Activated CD8-positive, alpha-beta T cell treated with anti-CD3 and anti-CD28 coated beads, Interleukin-2, amount 10 ng/mL, durations not matched to agents 7 days and 5 days (primary cell): ENCODE measurements at regions of chr15 and their contacts with region 1.

Region 1: DNA sequence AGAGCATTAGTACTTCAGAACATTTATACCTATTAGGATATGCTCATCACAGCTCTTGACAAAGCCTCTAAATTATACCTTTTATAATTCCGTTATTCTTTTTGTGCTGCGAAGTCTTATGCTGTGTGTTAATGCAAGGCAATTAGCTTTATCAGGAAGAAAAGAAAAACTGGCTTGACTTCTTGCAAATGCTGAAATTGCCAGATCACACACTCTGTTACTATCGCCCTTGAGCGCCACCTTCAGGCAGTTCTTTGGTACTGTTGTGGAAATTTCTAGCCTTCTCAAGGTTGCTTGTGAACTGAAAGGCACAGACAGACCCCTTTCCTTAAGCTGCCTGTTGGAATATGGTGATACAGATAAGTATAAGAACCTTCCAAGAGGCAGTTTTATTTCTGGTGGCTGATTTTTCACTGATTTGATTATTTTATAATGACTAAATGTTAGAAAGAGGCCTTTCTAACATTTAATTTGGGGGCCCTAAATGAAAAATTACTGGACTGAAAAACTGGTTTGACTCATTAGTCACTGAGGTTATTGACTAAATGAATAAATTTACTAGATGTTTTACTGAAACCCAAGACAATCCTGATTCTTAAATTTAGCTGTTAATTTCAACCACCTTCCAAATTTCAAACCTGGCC is 126.2 kb upstream of the RASGRP1 start:
- DNase-seq: peak; percentile 91
- ATAC-seq: peak; percentile 28
- H3K4me3 Mint-ChIP-seq: no peak overlapping the region
- H3K27ac Mint-ChIP-seq: no peak overlapping the region
- H3K4me1 Mint-ChIP-seq: peaks cover 82% of the 10 kb centered on the region
- H3K27me3 Mint-ChIP-seq: no peaks in the 10 kb centered on the region

Region 2: DNA sequence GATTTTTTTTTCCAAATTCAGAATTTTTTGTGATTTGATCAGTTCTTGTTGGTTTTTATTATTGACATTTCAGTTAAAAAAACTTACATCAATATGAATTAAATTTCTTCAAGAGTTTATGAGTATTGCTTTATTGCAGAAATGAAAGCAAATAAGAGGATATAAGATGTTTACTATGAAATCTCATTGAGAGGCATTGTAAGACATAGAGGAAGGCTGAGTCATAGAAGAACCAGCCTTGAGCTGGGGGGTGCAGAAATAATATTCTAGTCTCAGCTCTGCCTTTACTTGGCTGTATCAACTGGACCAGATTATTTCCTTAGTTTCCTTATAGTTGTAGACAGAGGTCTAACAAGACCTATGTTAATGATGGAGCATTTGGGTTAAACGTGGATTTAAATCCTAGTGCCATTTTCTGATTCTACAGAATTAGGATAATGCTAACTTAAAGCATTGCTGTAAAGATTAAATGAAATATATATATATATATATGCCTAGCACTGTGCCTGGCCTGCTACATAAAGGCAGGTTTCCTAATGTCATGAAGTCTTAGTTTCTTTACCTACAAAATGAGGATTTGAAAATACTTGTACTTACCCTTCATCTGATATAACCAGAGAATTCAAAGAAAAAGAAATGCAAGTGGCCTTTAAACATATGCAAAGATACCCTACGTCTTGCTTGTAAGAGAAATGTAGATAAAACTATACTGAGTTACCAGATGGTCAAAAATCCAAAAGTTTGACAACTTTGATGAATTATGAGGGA is 229.6 kb before region 1 on chr15:
- CTCF ChIA-PET with region 1: interaction called, 11 read pairs
- POLR2A ChIA-PET with region 1: no interaction called
- DNase-seq: no peak
- ATAC-seq: no peak
- H3K4me3 Mint-ChIP-seq: no peak overlapping the region
- H3K27ac Mint-ChIP-seq: no peak overlapping the region
- H3K4me1 Mint-ChIP-seq: peaks cover 26% of the 10 kb centered on the region
- H3K27me3 Mint-ChIP-seq: no peaks in the 10 kb centered on the region

Region 3: DNA sequence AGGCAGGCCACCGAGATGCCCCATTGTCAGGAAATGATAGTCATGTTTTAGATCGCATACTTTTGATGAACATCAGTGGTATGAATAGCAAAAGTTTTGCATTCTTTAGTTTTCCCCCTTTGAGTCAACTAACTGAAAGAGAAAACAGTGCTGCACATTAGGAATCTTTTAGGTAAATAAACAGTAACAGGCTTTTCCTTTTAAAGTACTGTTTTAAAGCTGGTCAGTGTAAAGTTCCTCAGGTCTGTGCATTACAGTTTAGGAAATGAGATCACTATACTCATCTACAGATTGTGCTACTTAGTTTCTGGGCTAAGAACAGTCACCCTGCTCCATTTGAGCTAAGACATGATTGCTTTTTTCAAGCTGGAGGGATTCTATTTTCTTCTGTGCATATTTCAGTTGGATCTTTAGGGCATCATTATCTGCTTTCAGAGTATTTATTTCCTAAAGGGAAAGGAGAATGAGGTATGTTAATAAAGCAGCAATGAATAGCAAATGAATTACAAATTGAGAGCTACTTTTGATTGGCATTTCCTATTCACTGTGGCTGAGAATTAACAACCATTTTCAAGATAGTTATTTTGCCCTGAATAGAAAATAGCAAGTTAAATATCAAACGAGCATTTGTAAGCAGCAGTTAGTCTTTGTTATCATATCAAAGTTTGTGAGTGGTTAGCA is 200.4 kb before region 1 on chr15:
- CTCF ChIA-PET with region 1: interaction called, 81 read pairs
- POLR2A ChIA-PET with region 1: interaction called, 4 read pairs
- DNase-seq: no peak
- ATAC-seq: no peak
- H3K4me3 Mint-ChIP-seq: no peak overlapping the region
- H3K27ac Mint-ChIP-seq: peak overlapping the region; percentile 31
- H3K4me1 Mint-ChIP-seq: peaks cover 26% of the 10 kb centered on the region
- H3K27me3 Mint-ChIP-seq: no peaks in the 10 kb centered on the region

Region 4: GRCh38 chr15:38514601-38515000 is 176.2 kb before region 1 on chr15:
- CTCF ChIA-PET with region 1: interaction called, 56 read pairs
- POLR2A ChIA-PET with region 1: interaction called, 3 read pairs
- DNase-seq: no peak
- ATAC-seq: no peak
- H3K4me3 Mint-ChIP-seq: no peak overlapping the region
- H3K27ac Mint-ChIP-seq: peak overlapping the region; percentile 72
- H3K4me1 Mint-ChIP-seq: peaks cover 20% of the 10 kb centered on the region
- H3K27me3 Mint-ChIP-seq: no peaks in the 10 kb centered on the region

Region 5: GRCh38 chr15:38554354-38554753 is 136.5 kb before region 1 on chr15:
- CTCF ChIA-PET with region 1: interaction called, 572 read pairs
- POLR2A ChIA-PET with region 1: interaction called, 336 read pairs
- DNase-seq: no peak
- ATAC-seq: peak; percentile 49
- H3K4me3 Mint-ChIP-seq: peak overlapping the region; percentile 4
- H3K27ac Mint-ChIP-seq: peak overlapping the region; percentile 44
- H3K4me1 Mint-ChIP-seq: peaks cover 83% of the 10 kb centered on the region
- H3K27me3 Mint-ChIP-seq: no peaks in the 10 kb centered on the region

Region 6: GRCh38 chr15:38631126-38632075 is 59.4 kb before region 1 on chr15:
- CTCF ChIA-PET with region 1: interaction called, 13 read pairs
- POLR2A ChIA-PET with region 1: no interaction called
- DNase-seq: no peak
- ATAC-seq: no peak
- H3K4me3 Mint-ChIP-seq: no peak overlapping the region
- H3K27ac Mint-ChIP-seq: peak overlapping the region; percentile 51
- H3K4me1 Mint-ChIP-seq: peaks cover 32% of the 10 kb centered on the region
- H3K27me3 Mint-ChIP-seq: no peaks in the 10 kb centered on the region